ENCODE measurements at regions of chr15 and their contacts with region 1.

Region 1: GRCh38 chr15:41838400-41838897 is at the start of gene PLA2G4B:
- DNase-seq: no peak
- H3K4me3 ChIP-seq: no peak within 1 kb of the TSS
- H3K27ac ChIP-seq: no peak within 1 kb of the TSS
- H3K4me1 ChIP-seq: peaks cover 0 to 6% (median under 1%) of the 10 kb centered on the region in 4 experiments
- H3K27me3 ChIP-seq: no peaks in the 10 kb centered on the region

Region 2: DNA sequence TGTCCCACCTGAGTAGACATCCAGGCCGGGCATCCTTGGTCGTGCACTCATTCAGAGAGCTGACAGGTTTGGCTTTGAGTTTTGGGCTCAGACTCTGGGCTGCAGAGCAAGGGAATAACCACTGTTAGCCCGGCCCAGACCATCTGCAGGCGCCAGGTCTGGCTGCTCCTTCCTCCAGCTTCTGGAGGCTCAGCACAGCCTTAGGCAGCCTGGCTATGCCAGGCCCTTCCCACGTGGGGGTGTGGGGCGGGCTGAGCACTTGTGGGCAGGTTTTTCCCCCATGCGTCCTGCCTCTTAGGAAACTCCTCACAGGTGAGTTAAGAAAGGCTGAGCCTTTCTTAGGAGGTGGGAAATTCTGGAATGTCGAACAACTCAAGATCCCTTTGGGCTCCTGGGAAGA is 11.4 kb after region 1 on chr15:
- CTCF ChIA-PET with region 1: interaction called, 11 read pairs
- POLR2A ChIA-PET with region 1: no interaction called
- DNase-seq: no peak
- H3K4me3 ChIP-seq: no peak overlapping the region
- H3K27ac ChIP-seq: no peak overlapping the region
- H3K4me1 ChIP-seq: no peaks in the 10 kb centered on the region
- H3K27me3 ChIP-seq: peaks cover 0 to 9% (median 0%) of the 10 kb centered on the region in 5 experiments

Region 3: DNA sequence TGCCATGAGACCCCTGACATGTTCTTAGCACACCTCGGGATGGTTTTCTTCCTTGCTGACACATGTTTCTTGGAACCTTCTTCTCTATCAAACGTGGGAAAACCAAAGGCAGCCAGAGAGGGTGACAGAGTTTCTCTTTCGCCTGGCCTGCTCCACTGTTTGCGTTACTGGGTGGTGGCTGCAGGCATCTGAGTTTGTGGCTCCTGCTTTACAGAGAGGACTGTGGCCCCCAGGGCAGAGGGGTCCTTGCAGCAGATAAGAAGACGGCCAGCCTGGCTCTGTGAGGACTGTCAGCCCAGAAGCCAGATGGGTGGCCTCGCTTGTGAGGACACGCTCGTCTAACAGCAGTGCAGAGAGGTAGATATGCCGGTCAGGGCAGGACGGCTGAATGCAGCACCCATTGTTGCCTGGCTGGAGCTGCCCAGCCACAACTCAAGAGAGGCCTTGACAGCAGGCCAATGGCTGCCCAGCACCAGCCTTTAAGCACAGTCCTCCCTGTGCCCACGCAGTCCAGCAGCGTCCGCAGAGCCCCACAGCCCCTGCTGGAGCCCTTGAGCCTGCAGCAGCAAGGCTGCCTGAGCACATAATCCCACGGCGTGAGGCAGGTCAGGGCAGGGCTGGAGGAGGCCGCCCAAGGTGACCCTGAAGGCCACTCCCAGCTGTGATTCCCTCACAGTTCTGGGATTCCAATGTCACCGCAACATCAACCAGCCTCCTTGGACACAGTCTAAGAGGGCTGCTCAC is 70.4 kb after region 1 on chr15:
- CTCF ChIA-PET with region 1: no interaction called
- POLR2A ChIA-PET with region 1: no interaction called
- DNase-seq: no peak
- H3K4me3 ChIP-seq: no peak overlapping the region
- H3K27ac ChIP-seq: no peak overlapping the region
- H3K4me1 ChIP-seq: peaks cover 0 to 12% (median 10%) of the 10 kb centered on the region in 4 experiments
- H3K27me3 ChIP-seq: no peaks in the 10 kb centered on the region

Region 4: DNA sequence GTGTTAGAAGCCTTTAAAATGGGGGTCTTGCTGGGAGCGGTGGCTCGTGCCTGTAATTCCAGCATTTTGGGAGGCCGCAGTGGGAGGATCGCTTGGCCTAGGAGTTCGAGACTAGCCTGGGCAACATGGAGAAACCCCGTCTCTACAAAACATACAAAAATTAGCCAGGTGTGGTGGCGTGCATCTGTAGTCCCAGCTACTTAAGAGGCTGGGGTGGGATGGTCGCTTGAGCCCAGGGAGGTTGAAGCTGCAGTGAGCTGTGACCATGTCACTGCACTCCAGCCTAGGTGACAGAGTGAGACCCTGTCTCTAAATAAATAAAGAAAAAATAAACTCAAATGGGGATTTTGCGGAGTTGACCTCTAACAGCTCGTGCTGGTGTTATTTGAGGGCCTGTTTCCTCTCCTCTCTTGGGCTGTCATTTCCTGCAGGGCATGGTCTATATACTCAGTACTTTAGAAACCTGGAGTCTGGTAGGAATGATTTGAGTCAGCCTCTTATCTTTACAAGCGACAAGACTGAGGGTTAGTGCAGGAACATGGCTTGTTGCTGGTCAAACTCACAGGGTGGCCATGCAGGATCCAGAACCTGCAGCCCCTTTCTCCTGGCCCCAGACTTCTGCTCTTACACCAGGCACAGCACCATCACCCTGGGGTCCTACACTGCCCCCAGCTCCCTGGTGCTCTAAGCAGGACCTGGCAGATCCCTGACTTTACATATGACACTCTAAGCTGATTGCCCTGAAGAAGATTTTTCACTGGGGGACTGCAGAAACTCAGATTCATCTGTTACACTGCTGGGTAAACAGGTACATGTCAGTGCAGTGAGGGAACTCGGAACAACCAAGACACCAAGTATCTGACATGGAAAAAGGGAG is 118.8 kb after region 1 on chr15:
- CTCF ChIA-PET with region 1: no interaction called
- POLR2A ChIA-PET with region 1: no interaction called
- DNase-seq: no peak
- H3K4me3 ChIP-seq: no peak overlapping the region
- H3K27ac ChIP-seq: no peak overlapping the region
- H3K4me1 ChIP-seq: peaks cover 0 to 8% (median 4%) of the 10 kb centered on the region in 4 experiments
- H3K27me3 ChIP-seq: no peaks in the 10 kb centered on the region

Measured in common myeloid progenitor, CD34-positive (primary cell).